Common myeloid progenitor, CD34-positive (primary cell): ENCODE measurements at regions of chr4 and their contacts with region 1.

Region 1: DNA sequence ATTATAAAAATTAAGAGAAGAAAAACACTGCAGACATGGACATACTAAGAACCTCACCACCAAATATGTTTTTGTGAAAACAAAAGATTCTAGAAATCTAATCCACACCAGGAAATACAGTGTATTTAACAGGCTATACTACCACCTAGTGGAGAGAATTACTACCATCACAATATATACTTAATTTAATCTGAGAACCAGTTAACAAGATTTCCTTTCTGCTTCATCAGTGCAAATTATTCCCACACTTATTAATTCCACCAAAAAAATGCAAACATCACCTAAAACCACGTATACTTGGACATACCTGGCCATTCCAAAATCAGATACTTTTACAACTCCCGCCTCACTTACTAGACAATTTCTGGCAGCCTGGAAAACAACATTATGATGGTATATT is 7.0 kb upstream of the TXK start:
- DNase-seq: peak; percentile 41 to 66 (median 64)
- H3K4me3 ChIP-seq: no peak overlapping the region
- H3K27ac ChIP-seq: no peak overlapping the region
- H3K4me1 ChIP-seq: peaks cover 0 to 9% (median 7%) of the 10 kb centered on the region in 4 experiments
- H3K27me3 ChIP-seq: no peaks in the 10 kb centered on the region

Region 2: DNA sequence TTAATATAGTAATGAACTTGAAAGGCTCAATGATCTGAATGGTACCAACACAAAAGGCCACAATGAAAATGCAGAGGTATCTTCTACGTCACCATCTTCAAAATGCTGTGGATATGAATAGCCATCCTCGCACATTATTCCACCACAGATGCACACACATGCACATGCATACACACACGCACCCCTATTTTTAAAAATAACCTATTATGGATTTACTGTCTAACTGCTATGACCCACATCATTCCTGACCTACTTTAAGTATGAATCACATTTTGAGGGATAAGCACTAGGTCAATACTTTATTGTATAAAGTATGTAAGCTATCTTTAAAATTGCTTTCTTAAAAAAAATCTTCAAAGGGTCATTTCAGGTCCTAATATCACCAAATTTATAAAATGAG is 278.8 kb before region 1 on chr4:
- CTCF ChIA-PET with region 1: no interaction called
- POLR2A ChIA-PET with region 1: no interaction called
- DNase-seq: no peak
- H3K4me3 ChIP-seq: no peak overlapping the region
- H3K27ac ChIP-seq: no peak overlapping the region
- H3K4me1 ChIP-seq: no peaks in the 10 kb centered on the region
- H3K27me3 ChIP-seq: no peaks in the 10 kb centered on the region

Region 3: GRCh38 chr4:48122756-48123155 is 18.3 kb before region 1 on chr4:
- CTCF ChIA-PET with region 1: interaction called, 47 read pairs
- POLR2A ChIA-PET with region 1: no interaction called
- DNase-seq: no peak
- H3K4me3 ChIP-seq: no peak overlapping the region
- H3K27ac ChIP-seq: no peak overlapping the region
- H3K4me1 ChIP-seq: peaks cover 0 to 9% (median 3%) of the 10 kb centered on the region in 4 experiments
- H3K27me3 ChIP-seq: no peaks in the 10 kb centered on the region

Region 4: GRCh38 chr4:48275247-48275646 is 134.2 kb after region 1 on chr4:
- CTCF ChIA-PET with region 1: interaction called, 13 read pairs
- POLR2A ChIA-PET with region 1: no interaction called
- DNase-seq: peak; percentile 64 to 76 (median 75)
- H3K4me3 ChIP-seq: no peak overlapping the region
- H3K27ac ChIP-seq: no peak overlapping the region
- H3K4me1 ChIP-seq: peaks cover 12 to 23% (median 16%) of the 10 kb centered on the region in 4 experiments
- H3K27me3 ChIP-seq: no peaks in the 10 kb centered on the region